ENCODE measurements at regions of chr7 and their contacts with region 1.

Region 1: GRCh38 chr7:23597094-23598091 is at the start of gene CCDC126:
- DNase-seq: peak; percentile 95
- H3K4me3 Mint-ChIP-seq: peak within 1 kb of the TSS; percentile 92
- H3K27ac Mint-ChIP-seq: peak within 1 kb of the TSS; percentile 85
- H3K4me1 Mint-ChIP-seq: peaks cover 52% of the 10 kb centered on the region
- H3K27me3 Mint-ChIP-seq: no peaks in the 10 kb centered on the region
- total RNA-seq, gene CCDC126: 6.2 and 8.1 TPM in 2 replicates

Region 2: DNA sequence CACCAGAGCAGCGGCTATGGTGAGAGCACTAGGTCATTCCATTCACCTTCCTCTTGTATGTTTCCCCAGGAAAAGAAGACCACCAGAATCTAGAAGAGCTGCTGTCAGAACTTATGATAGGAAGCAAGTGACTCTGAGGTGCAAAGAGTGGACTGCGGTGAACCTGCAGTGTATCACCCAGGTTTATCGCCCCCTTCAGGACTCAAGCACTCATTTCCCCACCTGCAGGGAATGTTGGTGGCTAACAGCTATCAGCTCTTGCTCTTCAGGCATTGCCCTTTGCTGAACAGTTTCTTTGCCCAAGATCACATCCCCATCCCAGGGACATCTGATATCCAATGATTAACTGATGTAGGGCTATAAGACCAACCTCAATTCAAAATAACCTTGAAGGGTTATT is 936.7 kb before region 1 on chr7:
- intact Hi-C with region 1: loop called (anchors 10 kb)
- DNase-seq: no peak
- H3K4me3 Mint-ChIP-seq: no peak overlapping the region
- H3K27ac Mint-ChIP-seq: no peak overlapping the region
- H3K4me1 Mint-ChIP-seq: peaks cover 22% of the 10 kb centered on the region
- H3K27me3 Mint-ChIP-seq: peaks cover 39% of the 10 kb centered on the region

Region 3: DNA sequence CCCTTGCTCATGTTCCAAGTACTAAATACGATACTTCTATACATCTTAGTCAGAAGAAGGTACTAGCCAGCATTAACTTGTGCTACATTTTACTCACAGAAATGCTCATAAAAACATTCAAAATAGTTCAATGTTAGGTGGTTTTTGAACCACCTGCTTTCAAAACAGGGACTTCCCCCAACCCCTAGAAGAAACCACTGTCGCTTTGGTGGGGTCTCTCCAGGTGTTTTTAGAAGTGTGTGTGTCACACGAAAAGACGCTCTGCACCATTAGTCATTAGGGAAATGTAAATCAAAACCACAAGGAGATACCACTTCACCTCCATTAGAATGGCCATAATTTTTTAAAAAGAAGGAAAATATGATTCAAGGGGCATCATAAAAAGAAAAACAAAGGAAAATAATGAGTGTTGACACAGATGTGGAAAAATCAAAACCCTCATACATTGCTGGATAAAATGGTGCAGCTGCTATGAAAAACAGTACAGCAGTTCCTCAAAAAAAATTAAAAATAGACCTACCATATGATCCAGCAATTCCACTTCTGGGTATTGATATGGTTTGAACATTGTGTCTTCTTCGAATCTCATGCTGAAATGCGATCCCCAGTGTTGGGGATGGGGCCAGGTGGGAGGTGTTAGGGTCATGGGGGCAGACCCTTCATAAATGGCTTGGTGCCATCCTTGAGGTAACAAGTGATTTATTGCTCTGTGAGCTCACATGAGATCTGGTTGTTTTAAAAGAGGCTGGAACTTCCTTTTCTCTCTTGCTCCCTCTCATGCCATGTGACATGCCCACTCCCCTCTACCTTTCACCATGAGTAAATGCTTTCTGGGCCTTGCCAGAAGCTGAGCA is 224.0 kb before region 1 on chr7:
- intact Hi-C with region 1: loop called (anchors 1 kb)
- DNase-seq: peak; percentile 80
- H3K4me3 Mint-ChIP-seq: peak overlapping the region; percentile 37
- H3K27ac Mint-ChIP-seq: peak overlapping the region; percentile 94
- H3K4me1 Mint-ChIP-seq: peaks cover 51% of the 10 kb centered on the region
- H3K27me3 Mint-ChIP-seq: peaks cover 17% of the 10 kb centered on the region

Region 4: DNA sequence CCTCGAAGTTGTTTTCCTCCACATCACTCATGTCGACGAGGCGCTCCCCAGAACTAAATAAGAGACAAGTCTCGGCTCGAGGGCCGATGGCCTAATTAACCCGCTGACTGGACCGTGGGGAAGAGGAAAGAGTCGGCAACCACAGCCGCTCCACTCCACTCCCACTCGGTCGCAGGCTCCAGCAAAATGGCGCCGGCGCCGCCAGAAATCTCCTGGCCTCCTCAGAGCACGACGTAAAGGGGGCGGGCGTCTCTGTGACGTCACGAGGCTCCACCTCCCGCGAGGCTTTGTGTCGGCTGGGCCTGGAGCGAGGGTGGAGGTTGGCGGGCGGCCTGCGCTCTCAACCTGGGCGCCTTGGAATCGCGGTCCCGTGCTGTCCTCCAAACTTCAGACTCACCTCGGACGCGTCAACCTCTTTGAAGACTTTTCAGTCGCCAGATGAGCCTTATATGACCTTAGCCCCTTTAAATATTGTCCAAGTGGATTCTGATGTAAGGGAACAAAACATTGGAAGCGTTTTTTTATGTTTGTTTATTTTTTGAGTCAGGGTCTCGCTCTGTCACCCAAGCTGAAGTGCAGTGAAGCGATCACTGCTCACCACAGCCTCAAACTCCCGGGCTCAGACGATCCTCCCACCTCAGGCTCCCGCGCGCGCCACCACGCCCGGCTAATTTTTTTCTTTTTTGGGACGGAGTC is 65.5 kb before region 1 on chr7 and contains the start of gene TRA2A:
- intact Hi-C with region 1: loop called (anchors 2 kb)
- DNase-seq: peak; percentile 99
- H3K4me3 Mint-ChIP-seq: peak within 1 kb of the TSS; percentile 97
- H3K27ac Mint-ChIP-seq: peak within 1 kb of the TSS; percentile 99
- H3K4me1 Mint-ChIP-seq: peaks cover 29% of the 10 kb centered on the region
- H3K27me3 Mint-ChIP-seq: no peaks in the 10 kb centered on the region
- total RNA-seq, gene TRA2A: 96.8 and 103 TPM in 2 replicates

Region 5: GRCh38 chr7:23679898-23680413 is 82.6 kb after region 1 on chr7 and contains the start of gene FAM221A:
- intact Hi-C with region 1: loop called (anchors 1 kb)
- DNase-seq: peak; percentile 93
- H3K4me3 Mint-ChIP-seq: peak within 1 kb of the TSS; percentile 91
- H3K27ac Mint-ChIP-seq: peak within 1 kb of the TSS; percentile 66
- H3K4me1 Mint-ChIP-seq: peaks cover 9% of the 10 kb centered on the region
- H3K27me3 Mint-ChIP-seq: peaks cover 13% of the 10 kb centered on the region
- total RNA-seq, gene FAM221A: 6.6 TPM in 2 replicates

Region 6: DNA sequence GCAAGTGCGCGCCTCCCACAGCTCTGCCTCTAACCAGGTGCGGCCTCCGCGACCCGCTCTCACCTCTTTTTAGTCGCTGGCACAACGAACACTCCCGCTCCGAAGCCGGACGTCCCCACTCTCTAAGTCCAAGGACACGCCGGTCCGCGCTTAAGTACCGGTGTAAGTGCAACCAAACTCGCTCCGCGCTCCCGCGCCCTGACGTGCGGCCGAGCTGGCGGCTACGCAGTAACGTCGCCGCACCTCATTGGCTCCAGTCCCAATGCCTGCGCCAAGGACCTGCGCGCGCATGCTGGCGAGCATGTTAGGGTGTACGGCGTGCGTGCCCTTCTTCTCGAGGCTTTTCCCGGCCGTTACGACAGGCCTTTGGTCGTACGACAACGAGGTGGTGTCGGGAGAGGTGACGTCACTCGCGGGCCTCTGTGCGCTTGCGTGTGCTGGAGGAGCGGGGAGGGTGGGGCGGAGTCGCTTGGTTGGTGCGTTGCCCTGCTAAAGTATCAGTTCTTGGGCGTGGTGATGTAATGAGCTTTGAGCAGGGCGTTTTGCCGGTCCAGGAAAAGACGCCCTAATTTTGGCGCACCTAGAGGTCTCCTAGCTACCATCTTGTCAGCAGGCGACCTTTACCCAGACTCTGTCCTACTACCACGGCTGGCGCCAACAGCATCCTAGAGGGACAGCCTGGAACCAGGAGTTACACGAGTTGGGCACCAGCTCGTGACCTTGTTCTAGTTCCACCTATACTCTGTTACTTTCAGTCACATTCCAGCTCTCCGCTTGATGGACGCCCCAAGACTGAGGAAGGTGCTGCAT is 1527.9 kb after region 1 on chr7 and contains the start of gene CYCS:
- intact Hi-C with region 1: loop called (anchors 5 kb)
- DNase-seq: peak; percentile 100
- H3K4me3 Mint-ChIP-seq: peak within 1 kb of the TSS; percentile 96
- H3K27ac Mint-ChIP-seq: peak within 1 kb of the TSS; percentile 95
- H3K4me1 Mint-ChIP-seq: peaks cover 31% of the 10 kb centered on the region
- H3K27me3 Mint-ChIP-seq: no peaks in the 10 kb centered on the region
- total RNA-seq, gene CYCS: 280 and 290 TPM in 2 replicates

Measured in activated CD4-positive, alpha-beta T cell treated with anti-CD3 and anti-CD28 coated beads, Interleukin-2, amount 10 ng/mL, durations not matched to agents 24 days and 14 days (primary cell).